ENCODE measurements at regions of chr11 and their contacts with region 1.

Region 1: DNA sequence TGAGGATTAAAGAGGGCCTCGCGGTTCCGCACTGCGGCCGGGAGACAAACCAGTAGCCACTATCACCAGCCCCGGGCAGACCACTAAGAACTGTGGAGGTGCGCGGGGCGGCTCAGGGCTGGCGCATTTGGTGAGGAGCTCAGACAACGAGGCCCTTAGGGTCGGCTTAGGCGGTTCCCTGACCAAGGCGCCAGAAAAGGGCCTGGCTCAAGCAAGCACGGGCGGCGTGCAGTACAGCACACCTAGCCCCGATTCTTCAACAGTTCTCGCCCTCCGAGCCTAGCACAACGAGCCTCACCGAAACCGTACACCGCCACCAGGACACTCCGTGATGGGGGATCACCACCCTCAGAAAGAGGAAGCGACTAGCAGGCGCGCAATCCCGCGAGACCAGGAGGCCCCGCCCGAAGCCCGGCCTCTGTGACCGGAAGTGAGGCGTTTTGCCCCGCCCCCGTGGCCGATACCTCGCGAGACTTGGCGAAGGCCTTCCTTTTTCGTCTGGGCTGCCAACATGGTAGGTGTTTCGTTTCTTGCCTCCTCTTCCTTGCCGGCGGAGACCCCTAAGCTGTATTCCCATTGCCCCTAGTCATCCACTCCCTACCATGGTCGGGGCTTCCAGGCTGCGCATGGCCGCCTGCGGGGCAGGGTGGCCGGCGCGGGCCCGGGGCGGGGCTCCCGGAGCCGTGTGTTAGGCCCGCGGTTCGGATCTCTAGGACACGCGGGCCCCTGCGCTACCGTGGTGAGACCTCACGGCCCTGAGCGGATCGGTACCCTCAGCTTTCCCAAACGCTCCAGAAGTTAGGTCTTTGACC is at the starts of genes RPL27A and TRIM66:
- DNase-seq: peak; percentile 97
- H3K4me3 ChIP-seq: peak within 1 kb of the TSS; percentile 58 to 92 (median 88)
- H3K27ac ChIP-seq: peak within 1 kb of the TSS; percentile 86
- H3K4me1 ChIP-seq: peaks cover 30% of the 10 kb centered on the region
- H3K27me3 ChIP-seq: no peaks in the 10 kb centered on the region
- CTCF ChIP-seq: peak in 1 of 2 donors; percentile 7
- POLR2A ChIP-seq: peak; percentile 100
- total RNA-seq, gene RPL27A: 952 and 1,303 TPM in 2 replicates
- total RNA-seq, gene TRIM66: 8.6 and 11.7 TPM in 2 replicates

Region 2: DNA sequence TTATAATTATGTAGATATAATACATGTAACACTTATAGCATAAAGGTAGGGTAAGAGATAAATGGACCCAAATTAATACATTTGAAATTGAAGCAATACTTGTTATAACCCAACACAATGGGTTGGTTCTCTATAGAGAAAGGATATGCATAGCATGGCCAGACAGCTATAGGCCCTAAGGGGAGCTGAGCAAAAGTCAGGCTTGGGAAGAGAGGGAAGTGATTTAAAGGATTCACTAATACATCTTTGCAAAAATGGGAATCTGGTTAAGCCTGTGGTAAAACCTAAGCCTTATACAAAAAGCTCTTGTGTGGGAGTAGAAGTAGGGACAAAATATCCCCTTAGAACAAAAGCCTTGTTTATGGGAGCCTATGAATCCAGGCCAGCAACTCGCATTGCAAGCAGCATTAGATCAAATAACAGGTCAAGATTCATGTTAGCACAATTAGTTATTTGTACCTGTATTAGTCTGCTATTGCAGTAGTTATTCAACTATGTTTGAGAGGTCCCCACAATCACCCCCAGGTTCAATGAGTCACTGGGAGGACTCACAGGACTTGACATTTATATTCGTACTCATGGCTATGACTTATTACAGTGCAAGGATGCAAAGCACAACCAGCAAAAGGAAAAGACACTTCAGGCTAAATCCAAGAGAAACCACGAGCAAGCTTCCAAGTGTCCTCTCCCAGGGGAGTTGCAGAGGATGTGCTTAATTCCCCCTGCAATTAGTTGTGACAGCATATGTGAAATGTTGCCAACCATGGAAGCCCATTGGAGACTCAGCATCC is 274.2 kb before region 1 on chr11:
- CTCF ChIA-PET with region 1: no interaction called
- POLR2A ChIA-PET with region 1: no interaction called
- dilution Hi-C with region 1: no loop called
- intact Hi-C with region 1: no loop called
- DNase-seq: no peak
- H3K4me3 ChIP-seq: no peak overlapping the region
- H3K27ac ChIP-seq: no peak overlapping the region
- H3K4me1 ChIP-seq: no peaks in the 10 kb centered on the region
- H3K27me3 ChIP-seq: no peaks in the 10 kb centered on the region
- CTCF ChIP-seq: no peak
- POLR2A ChIP-seq: no peak

Region 3: DNA sequence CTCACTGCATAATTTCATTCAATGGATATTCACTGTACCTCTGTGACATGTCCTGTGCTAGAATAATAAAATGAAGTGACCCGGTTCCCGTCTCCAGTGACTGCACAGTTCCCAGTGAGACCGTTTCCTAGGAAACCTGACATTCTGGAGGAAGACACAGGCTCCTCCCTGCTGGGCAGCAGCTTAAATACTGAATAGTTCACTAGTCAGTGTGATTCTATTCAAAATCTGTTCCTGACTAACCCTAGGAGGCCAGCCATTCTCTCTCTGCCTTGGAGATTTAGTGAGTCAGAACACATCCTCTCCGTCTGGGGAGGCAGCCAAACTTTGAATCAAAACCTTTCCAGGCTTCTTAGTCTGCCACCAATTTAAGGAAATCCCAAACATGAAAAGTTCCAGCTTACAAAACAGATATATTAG is 11.3 kb before region 1 on chr11:
- CTCF ChIA-PET with region 1: interaction called, 17 read pairs
- POLR2A ChIA-PET with region 1: interaction called, 3 read pairs
- dilution Hi-C with region 1: no loop called
- intact Hi-C with region 1: loop called (anchors 1 kb)
- DNase-seq: peak; percentile 92
- H3K4me3 ChIP-seq: no peak overlapping the region
- H3K27ac ChIP-seq: peak overlapping the region; percentile 78
- H3K4me1 ChIP-seq: peaks cover 18% of the 10 kb centered on the region
- H3K27me3 ChIP-seq: no peaks in the 10 kb centered on the region
- CTCF ChIP-seq: no peak
- POLR2A ChIP-seq: no peak

Region 4: GRCh38 chr11:8693010-8693551 is 10.6 kb after region 1 on chr11:
- CTCF ChIA-PET with region 1: no interaction called
- POLR2A ChIA-PET with region 1: no interaction called
- dilution Hi-C with region 1: no loop called
- intact Hi-C with region 1: no loop called
- DNase-seq: no peak
- H3K4me3 ChIP-seq: no peak overlapping the region
- H3K27ac ChIP-seq: no peak overlapping the region
- H3K4me1 ChIP-seq: peaks cover 14% of the 10 kb centered on the region
- H3K27me3 ChIP-seq: no peaks in the 10 kb centered on the region
- CTCF ChIP-seq: no peak
- POLR2A ChIP-seq: no peak

Measured in endothelial cell of umbilical vein (primary cell).